T-cell (primary cell): ENCODE measurements at regions of chr2 and their contacts with region 1.

Region 1: GRCh38 chr2:30447149-30448045 is at the start of gene LCLAT1:
- DNase-seq: peak; percentile 71 to 93 (median 82)
- ATAC-seq: peak; percentile 83 to 93 (median 86)
- H3K4me3 ChIP-seq: peak within 1 kb of the TSS; percentile 66 to 93
- H3K4me3 Mint-ChIP-seq: peak within 1 kb of the TSS; percentile 93 to 97 (median 95)
- H3K27ac ChIP-seq: peak within 1 kb of the TSS; percentile 89
- H3K27ac Mint-ChIP-seq: peak within 1 kb of the TSS; percentile 92 to 95
- H3K4me1 ChIP-seq: peaks cover 16 to 17% of the 10 kb centered on the region in 2 experiments
- H3K4me1 Mint-ChIP-seq: peaks cover 39 to 56% (median 40%) of the 10 kb centered on the region in 3 donors
- H3K27me3 ChIP-seq: no peaks in the 10 kb centered on the region
- H3K27me3 Mint-ChIP-seq: no peaks in the 10 kb centered on the region
- total RNA-seq, gene LCLAT1: 13.8 to 33.0 (median 19.6) TPM

Region 2: GRCh38 chr2:30421604-30422443 is 25.6 kb before region 1 on chr2:
- CTCF ChIA-PET with region 1: interaction called, 3 to 4 read pairs
- POLR2A ChIA-PET with region 1: interaction called in 1 of 2 experiments, 10 read pairs
- DNase-seq: peak in 31 of 35 experiments; percentile 7 to 74 (median 36)
- ATAC-seq: peak; percentile 60 to 71 (median 61)
- H3K4me3 ChIP-seq: no peak overlapping the region
- H3K4me3 Mint-ChIP-seq: peak overlapping the region; percentile 46 to 53 (median 51)
- H3K27ac ChIP-seq: peak overlapping the region; percentile 86
- H3K27ac Mint-ChIP-seq: peak overlapping the region; percentile 91 to 95
- H3K4me1 ChIP-seq: peaks cover 28 to 41% of the 10 kb centered on the region in 2 experiments
- H3K4me1 Mint-ChIP-seq: peaks cover 51 to 62% (median 51%) of the 10 kb centered on the region in 3 donors
- H3K27me3 ChIP-seq: no peaks in the 10 kb centered on the region
- H3K27me3 Mint-ChIP-seq: no peaks in the 10 kb centered on the region

Region 3: GRCh38 chr2:30886080-30886479 is 438.7 kb after region 1 on chr2:
- CTCF ChIA-PET with region 1: no interaction called
- POLR2A ChIA-PET with region 1: no interaction called
- DNase-seq: no peak
- ATAC-seq: no peak
- H3K4me3 ChIP-seq: no peak overlapping the region
- H3K4me3 Mint-ChIP-seq: no peak overlapping the region
- H3K27ac ChIP-seq: no peak overlapping the region
- H3K27ac Mint-ChIP-seq: no peak overlapping the region
- H3K4me1 ChIP-seq: no peaks in the 10 kb centered on the region
- H3K4me1 Mint-ChIP-seq: no peaks in the 10 kb centered on the region
- H3K27me3 ChIP-seq: peaks cover 0 to 21% of the 10 kb centered on the region in 2 experiments
- H3K27me3 Mint-ChIP-seq: peaks cover 15 to 19% of the 10 kb centered on the region in 2 donors